Naive thymus-derived CD4-positive, alpha-beta T cell (primary cell): ENCODE measurements at regions of chrX and their contacts with region 1.

Region 1: DNA sequence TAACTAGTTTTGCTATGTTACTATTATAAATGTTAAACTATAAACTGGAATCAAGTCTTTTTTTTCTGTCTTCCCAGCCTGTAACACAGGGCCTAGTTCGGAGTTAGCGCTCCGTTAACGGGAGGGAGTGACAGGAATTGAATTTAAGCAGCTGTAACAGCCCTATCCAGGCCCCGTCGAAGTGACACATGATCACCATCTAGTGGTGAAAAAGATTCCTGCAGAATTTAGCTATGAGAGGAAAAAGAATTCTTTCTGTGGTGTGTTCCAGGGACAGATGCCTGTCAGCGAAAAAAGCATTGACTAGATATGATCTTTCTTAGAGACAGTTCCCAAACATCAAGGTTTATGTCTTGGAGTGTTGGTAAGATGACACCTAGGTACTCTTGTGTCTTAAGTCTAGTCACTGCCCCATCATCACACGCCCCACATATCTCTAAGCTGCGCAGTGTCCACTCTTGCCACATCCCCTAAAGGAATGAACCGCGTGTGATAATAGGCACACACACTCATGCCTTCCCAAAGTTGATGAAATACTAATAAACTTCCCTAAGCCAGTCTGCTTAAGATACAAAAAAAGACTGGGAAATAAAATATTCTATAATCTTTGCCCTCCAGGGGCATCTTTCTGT is 2.0 kb downstream of the GAB3 start:
- DNase-seq: peak in 7 of 9 donors; percentile 46 to 73 (median 69)
- ATAC-seq: peak; percentile 81
- H3K4me3 ChIP-seq: no peak overlapping the region
- H3K4me3 Mint-ChIP-seq: peak overlapping the region in 8 of 10 donors; percentile 3 to 64 (median 50)
- H3K27ac ChIP-seq: no peak overlapping the region
- H3K27ac Mint-ChIP-seq: peak overlapping the region in 1 of 9 donors; percentile 33
- H3K4me1 ChIP-seq: peaks cover 12 to 17% of the 10 kb centered on the region in 2 donors
- H3K4me1 Mint-ChIP-seq: peaks cover 0 to 33% (median 22%) of the 10 kb centered on the region in 7 donors
- H3K27me3 ChIP-seq: no peaks in the 10 kb centered on the region
- H3K27me3 Mint-ChIP-seq: peaks cover 0 to 14% (median 0%) of the 10 kb centered on the region in 5 donors

Region 2: DNA sequence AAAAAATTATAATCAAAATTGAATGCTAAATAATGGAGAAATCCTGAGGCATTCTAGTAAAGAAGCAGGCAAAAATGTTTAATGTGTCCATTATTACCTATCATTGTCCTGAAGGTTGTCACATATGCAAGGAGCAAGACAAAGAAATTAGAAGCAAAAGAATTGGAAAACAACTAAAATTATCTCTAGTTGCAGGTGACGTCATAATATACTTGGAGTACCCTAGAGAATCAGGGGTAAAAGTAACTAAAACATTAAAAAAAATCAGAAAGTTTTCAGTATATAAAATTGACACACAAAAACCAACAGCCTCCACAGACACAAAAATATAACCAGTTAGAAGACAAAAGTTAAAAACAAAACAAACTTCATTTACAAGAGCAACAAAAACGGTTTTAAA is 1548.4 kb before region 1 on chrX:
- CTCF ChIA-PET with region 1: no interaction called
- POLR2A ChIA-PET with region 1: no interaction called
- intact Hi-C with region 1: no loop called
- DNase-seq: no peak
- ATAC-seq: no peak
- H3K4me3 ChIP-seq: no peak overlapping the region
- H3K4me3 Mint-ChIP-seq: no peak overlapping the region
- H3K27ac ChIP-seq: no peak overlapping the region
- H3K27ac Mint-ChIP-seq: no peak overlapping the region
- H3K4me1 ChIP-seq: no peaks in the 10 kb centered on the region
- H3K4me1 Mint-ChIP-seq: no peaks in the 10 kb centered on the region
- H3K27me3 ChIP-seq: no peaks in the 10 kb centered on the region
- H3K27me3 Mint-ChIP-seq: peaks cover 11 to 24% (median 15%) of the 10 kb centered on the region in 5 donors

Region 3: GRCh38 chrX:154064637-154065435 is 684.0 kb before region 1 on chrX:
- CTCF ChIA-PET with region 1: no interaction called
- POLR2A ChIA-PET with region 1: no interaction called
- intact Hi-C with region 1: no loop called
- DNase-seq: no peak
- ATAC-seq: no peak
- H3K4me3 ChIP-seq: no peak overlapping the region
- H3K4me3 Mint-ChIP-seq: peak overlapping the region in 8 of 10 donors; percentile 5 to 67 (median 46)
- H3K27ac ChIP-seq: peak overlapping the region; percentile 44
- H3K27ac Mint-ChIP-seq: peak overlapping the region in 8 of 9 donors; percentile 59 to 89 (median 80)
- H3K4me1 ChIP-seq: peaks cover 10 to 16% of the 10 kb centered on the region in 2 donors
- H3K4me1 Mint-ChIP-seq: peaks cover 34 to 81% (median 61%) of the 10 kb centered on the region in 7 donors
- H3K27me3 ChIP-seq: no peaks in the 10 kb centered on the region
- H3K27me3 Mint-ChIP-seq: no peaks in the 10 kb centered on the region

Region 4: GRCh38 chrX:154714925-154715324 is 33.9 kb before region 1 on chrX:
- CTCF ChIA-PET with region 1: interaction called, 35 read pairs
- POLR2A ChIA-PET with region 1: interaction called, 6 read pairs
- intact Hi-C with region 1: loop called (anchors 1 kb)
- DNase-seq: peak in 7 of 9 donors; percentile 28 to 64 (median 57)
- ATAC-seq: peak; percentile 59
- H3K4me3 ChIP-seq: no peak overlapping the region
- H3K4me3 Mint-ChIP-seq: no peak overlapping the region
- H3K27ac ChIP-seq: no peak overlapping the region
- H3K27ac Mint-ChIP-seq: peak overlapping the region in 2 of 9 donors; percentile 16 to 76
- H3K4me1 ChIP-seq: peaks cover 33 to 62% of the 10 kb centered on the region in 2 donors
- H3K4me1 Mint-ChIP-seq: peaks cover 37 to 69% (median 45%) of the 10 kb centered on the region in 7 donors
- H3K27me3 ChIP-seq: no peaks in the 10 kb centered on the region
- H3K27me3 Mint-ChIP-seq: no peaks in the 10 kb centered on the region

Region 5: GRCh38 chrX:154724993-154725756 is 23.7 kb before region 1 on chrX:
- CTCF ChIA-PET with region 1: interaction called, 35 read pairs
- POLR2A ChIA-PET with region 1: no interaction called
- intact Hi-C with region 1: loop called in 1 of 2 experiments (anchors 1 kb)
- DNase-seq: no peak
- ATAC-seq: peak; percentile 51
- H3K4me3 ChIP-seq: no peak overlapping the region
- H3K4me3 Mint-ChIP-seq: peak overlapping the region in 1 of 10 donors; percentile 64
- H3K27ac ChIP-seq: no peak overlapping the region
- H3K27ac Mint-ChIP-seq: peak overlapping the region in 5 of 9 donors; percentile 9 to 67 (median 32)
- H3K4me1 ChIP-seq: peaks cover 0 to 42% of the 10 kb centered on the region in 2 donors
- H3K4me1 Mint-ChIP-seq: peaks cover 0 to 72% (median 32%) of the 10 kb centered on the region in 7 donors
- H3K27me3 ChIP-seq: no peaks in the 10 kb centered on the region
- H3K27me3 Mint-ChIP-seq: no peaks in the 10 kb centered on the region

Region 6: DNA sequence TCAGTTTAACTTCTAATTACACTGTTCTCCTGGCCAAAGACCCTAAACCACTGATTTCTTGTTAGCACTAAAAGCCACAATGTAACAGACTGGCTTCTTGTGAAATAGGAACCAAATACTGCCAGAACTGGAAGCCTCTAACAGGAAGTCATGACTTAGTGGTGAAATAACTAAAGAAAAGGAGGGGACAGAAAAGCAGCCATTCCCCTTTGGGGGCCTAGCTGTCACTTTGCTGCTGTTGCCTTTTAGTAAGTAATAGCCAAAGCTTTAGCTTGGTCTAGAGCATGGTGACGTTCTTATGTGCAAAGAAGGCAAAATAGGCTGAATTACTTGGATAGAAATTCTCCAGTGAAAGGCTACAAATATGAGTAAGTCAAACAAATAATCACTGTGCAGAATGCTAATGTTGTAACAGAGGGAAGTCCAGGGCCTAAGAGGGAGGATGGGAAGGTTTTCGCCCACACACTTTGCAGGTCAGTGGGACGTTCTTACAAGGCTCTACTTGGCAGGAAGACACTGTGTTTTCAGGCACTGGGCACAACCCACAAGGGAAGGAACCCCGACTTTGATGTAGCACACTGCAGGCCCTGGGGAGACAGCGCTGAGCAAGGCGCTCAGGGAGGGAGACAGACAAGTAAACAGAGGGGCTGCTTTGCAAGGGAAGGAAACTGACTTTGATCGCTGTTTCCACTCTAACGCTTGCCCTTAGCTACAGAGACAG is 14.6 kb before region 1 on chrX:
- CTCF ChIA-PET with region 1: interaction called, 16 read pairs
- POLR2A ChIA-PET with region 1: interaction called, 6 read pairs
- intact Hi-C with region 1: loop called (anchors 1 to 2 kb)
- DNase-seq: peak in 4 of 9 donors; percentile 17 to 33 (median 28)
- ATAC-seq: peak; percentile 72
- H3K4me3 ChIP-seq: no peak overlapping the region
- H3K4me3 Mint-ChIP-seq: peak overlapping the region; percentile 34 to 87 (median 78)
- H3K27ac ChIP-seq: peak overlapping the region; percentile 40
- H3K27ac Mint-ChIP-seq: peak overlapping the region; percentile 81 to 95 (median 89)
- H3K4me1 ChIP-seq: peaks cover 43 to 75% of the 10 kb centered on the region in 2 donors
- H3K4me1 Mint-ChIP-seq: peaks cover 42 to 93% (median 89%) of the 10 kb centered on the region in 7 donors
- H3K27me3 ChIP-seq: no peaks in the 10 kb centered on the region
- H3K27me3 Mint-ChIP-seq: no peaks in the 10 kb centered on the region

Region 7: DNA sequence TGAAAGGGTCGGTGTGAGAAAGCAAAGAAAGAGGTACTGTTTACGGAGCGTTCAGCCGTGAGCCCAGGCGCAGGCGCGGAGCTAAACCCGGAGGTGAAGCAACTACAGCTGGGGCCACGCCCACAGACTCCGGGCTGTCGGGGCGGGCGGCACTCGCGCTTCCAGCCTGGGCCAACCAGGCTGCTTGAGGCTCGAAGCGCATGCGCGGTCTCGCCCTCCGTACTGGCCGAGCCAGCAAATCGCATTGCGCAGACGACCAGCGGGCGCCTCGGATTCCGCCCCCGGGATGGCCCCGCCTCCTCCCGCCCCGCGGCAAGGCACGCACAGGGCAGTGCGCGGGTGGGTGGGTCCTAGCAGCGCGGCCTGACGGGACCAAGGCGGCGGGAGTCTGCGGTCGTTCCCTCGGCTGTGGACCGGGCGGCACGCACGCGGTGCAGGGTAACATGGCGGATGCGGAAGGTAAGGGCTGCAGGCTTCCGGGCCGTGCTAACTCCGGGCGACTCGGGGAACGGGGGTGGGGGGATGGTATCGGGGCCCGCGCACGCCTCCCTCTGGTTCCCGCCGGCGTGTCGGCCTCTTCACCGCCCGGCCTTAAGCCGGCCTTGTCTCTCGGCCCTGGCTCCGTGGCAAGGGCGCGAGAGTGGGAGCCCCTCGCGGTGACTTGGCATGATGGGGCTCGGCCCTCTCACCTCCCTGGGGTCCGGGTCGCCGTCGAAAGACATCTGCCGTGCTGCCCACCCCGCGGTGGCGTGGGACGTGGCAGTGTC is 13.9 kb after region 1 on chrX and contains the start of gene DKC1:
- CTCF ChIA-PET with region 1: interaction called, 7 read pairs
- POLR2A ChIA-PET with region 1: interaction called, 40 read pairs
- intact Hi-C with region 1: loop called (anchors 1 kb)
- DNase-seq: peak; percentile 85 to 95 (median 93)
- ATAC-seq: peak; percentile 94
- H3K4me3 ChIP-seq: peak within 1 kb of the TSS; percentile 61
- H3K4me3 Mint-ChIP-seq: peak within 1 kb of the TSS; percentile 85 to 92 (median 90)
- H3K27ac ChIP-seq: peak within 1 kb of the TSS; percentile 72
- H3K27ac Mint-ChIP-seq: peak within 1 kb of the TSS; percentile 89 to 97 (median 92)
- H3K4me1 ChIP-seq: peaks cover 9% of the 10 kb centered on the region in 2 donors
- H3K4me1 Mint-ChIP-seq: peaks cover 0 to 24% (median 18%) of the 10 kb centered on the region in 7 donors
- H3K27me3 ChIP-seq: no peaks in the 10 kb centered on the region
- H3K27me3 Mint-ChIP-seq: no peaks in the 10 kb centered on the region
- total RNA-seq, gene DKC1: 50.5 to 75.0 (median 66.5) TPM

Region 8: DNA sequence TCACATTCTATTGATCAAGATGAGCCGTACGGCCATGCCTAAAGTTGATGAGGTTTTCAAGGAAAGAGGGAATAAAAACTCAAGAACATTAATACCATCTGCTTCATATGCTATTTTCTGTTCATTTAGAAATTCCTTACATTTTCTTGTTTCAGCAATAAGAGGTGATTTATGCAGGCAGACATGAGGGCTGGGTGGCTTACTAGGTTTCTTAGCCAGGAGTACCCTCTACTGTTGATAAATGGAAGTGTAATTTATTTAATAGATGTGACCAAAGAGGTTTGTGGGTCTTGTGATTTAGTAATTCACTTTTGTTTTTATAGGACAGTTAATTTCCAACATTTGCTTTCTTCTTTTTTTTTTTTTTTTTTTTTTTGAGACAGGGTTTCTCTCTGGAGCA is 92.0 kb after region 1 on chrX:
- CTCF ChIA-PET with region 1: interaction called, 5 read pairs
- POLR2A ChIA-PET with region 1: no interaction called
- intact Hi-C with region 1: loop called (anchors 1 kb)
- DNase-seq: peak in 7 of 9 donors; percentile 2 to 50 (median 34)
- ATAC-seq: peak; percentile 69
- H3K4me3 ChIP-seq: no peak overlapping the region
- H3K4me3 Mint-ChIP-seq: no peak overlapping the region
- H3K27ac ChIP-seq: no peak overlapping the region
- H3K27ac Mint-ChIP-seq: no peak overlapping the region
- H3K4me1 ChIP-seq: no peaks in the 10 kb centered on the region
- H3K4me1 Mint-ChIP-seq: peaks cover 0 to 11% (median 0%) of the 10 kb centered on the region in 7 donors
- H3K27me3 ChIP-seq: no peaks in the 10 kb centered on the region
- H3K27me3 Mint-ChIP-seq: peaks cover 0 to 6% (median 0%) of the 10 kb centered on the region in 5 donors